Mammary epithelial cell (primary cell): ENCODE measurements at regions of chr1 and their contacts with region 1.

Region 1: DNA sequence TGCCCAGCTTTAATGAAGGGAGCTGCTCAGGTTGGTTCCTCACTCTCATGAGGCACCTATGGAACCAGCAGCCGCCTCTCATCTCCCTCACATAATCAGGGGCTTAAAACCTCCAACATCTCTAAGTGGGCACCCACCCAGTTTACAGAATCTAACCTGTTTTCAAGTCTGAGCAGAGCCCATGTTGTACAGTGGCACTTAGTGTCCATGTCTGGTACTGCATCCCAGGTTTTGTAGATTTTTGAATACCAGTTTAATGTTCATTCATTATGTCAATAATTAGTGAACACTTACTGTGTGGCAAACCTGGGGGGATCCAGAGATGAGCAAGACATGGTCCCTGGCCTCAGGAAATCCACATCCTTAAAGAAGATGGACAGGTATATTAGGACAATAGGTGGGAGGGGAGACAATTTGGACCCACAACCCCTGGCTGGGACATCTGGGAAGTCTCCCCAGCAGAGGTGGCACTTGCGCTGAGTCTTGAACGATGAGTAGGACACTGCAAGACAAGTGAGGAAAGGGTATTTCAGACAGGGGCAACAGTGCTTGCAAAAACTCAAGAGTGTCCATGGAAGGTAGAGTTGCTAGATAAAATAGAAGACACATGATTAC is 83.3 kb downstream of the LACTBL1 start:
- DNase-seq: no peak
- H3K4me3 ChIP-seq: no peak overlapping the region
- H3K27ac ChIP-seq: no peak overlapping the region
- H3K4me1 ChIP-seq: no peaks in the 10 kb centered on the region
- H3K27me3 ChIP-seq: no peaks in the 10 kb centered on the region
- CTCF ChIP-seq: peak; percentile 83 to 91

Region 2: GRCh38 chr1:22625262-22625925 is 263.9 kb before region 1 on chr1:
- CTCF ChIA-PET with region 1: no interaction called
- dilution Hi-C with region 1: no loop called
- in situ Hi-C with region 1: no loop called
- intact Hi-C with region 1: no loop called
- DNase-seq: peak; percentile 4
- H3K4me3 ChIP-seq: no peak overlapping the region
- H3K27ac ChIP-seq: no peak overlapping the region
- H3K4me1 ChIP-seq: no peaks in the 10 kb centered on the region
- H3K27me3 ChIP-seq: peaks cover 7% of the 10 kb centered on the region
- CTCF ChIP-seq: no peak

Region 3: GRCh38 chr1:22673486-22674409 is 215.6 kb before region 1 on chr1:
- CTCF ChIA-PET with region 1: no interaction called
- dilution Hi-C with region 1: no loop called
- in situ Hi-C with region 1: no loop called
- intact Hi-C with region 1: loop called (anchors 1 kb)
- DNase-seq: peak; percentile 39
- H3K4me3 ChIP-seq: no peak overlapping the region
- H3K27ac ChIP-seq: no peak overlapping the region
- H3K4me1 ChIP-seq: no peaks in the 10 kb centered on the region
- H3K27me3 ChIP-seq: no peaks in the 10 kb centered on the region
- CTCF ChIP-seq: peak; percentile 66 to 77

Region 4: GRCh38 chr1:22814176-22815042 is 74.9 kb before region 1 on chr1:
- CTCF ChIA-PET with region 1: no interaction called
- dilution Hi-C with region 1: loop called (anchors 5 kb)
- in situ Hi-C with region 1: no loop called
- intact Hi-C with region 1: no loop called
- DNase-seq: no peak
- H3K4me3 ChIP-seq: no peak overlapping the region
- H3K27ac ChIP-seq: no peak overlapping the region
- H3K4me1 ChIP-seq: peaks cover 10% of the 10 kb centered on the region
- H3K27me3 ChIP-seq: no peaks in the 10 kb centered on the region
- CTCF ChIP-seq: no peak

Region 5: DNA sequence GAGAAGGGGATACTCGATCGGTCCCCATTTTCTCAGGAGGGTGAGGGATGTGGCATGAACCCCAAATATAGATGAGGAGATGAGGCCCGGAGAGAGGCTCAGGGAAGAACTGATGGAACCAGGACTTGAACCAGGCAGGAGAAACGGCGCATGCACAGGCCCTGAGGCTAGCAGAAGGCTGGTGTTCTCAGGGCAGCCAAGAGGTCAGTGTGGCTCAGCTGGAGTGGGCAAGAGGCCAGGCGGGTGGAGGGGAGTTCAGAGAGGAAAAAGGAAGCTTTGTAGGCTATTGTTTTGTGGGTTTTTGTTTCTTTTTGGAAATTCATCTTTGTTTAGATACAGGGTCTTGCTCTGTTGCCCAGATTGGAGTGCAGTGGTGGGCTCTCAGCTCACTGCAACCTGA is 38.6 kb before region 1 on chr1:
- CTCF ChIA-PET with region 1: no interaction called
- dilution Hi-C with region 1: loop called (anchors 5 kb)
- in situ Hi-C with region 1: no loop called
- intact Hi-C with region 1: no loop called
- DNase-seq: no peak
- H3K4me3 ChIP-seq: no peak overlapping the region
- H3K27ac ChIP-seq: no peak overlapping the region
- H3K4me1 ChIP-seq: no peaks in the 10 kb centered on the region
- H3K27me3 ChIP-seq: peaks cover 3% of the 10 kb centered on the region
- CTCF ChIP-seq: no peak

Region 6: DNA sequence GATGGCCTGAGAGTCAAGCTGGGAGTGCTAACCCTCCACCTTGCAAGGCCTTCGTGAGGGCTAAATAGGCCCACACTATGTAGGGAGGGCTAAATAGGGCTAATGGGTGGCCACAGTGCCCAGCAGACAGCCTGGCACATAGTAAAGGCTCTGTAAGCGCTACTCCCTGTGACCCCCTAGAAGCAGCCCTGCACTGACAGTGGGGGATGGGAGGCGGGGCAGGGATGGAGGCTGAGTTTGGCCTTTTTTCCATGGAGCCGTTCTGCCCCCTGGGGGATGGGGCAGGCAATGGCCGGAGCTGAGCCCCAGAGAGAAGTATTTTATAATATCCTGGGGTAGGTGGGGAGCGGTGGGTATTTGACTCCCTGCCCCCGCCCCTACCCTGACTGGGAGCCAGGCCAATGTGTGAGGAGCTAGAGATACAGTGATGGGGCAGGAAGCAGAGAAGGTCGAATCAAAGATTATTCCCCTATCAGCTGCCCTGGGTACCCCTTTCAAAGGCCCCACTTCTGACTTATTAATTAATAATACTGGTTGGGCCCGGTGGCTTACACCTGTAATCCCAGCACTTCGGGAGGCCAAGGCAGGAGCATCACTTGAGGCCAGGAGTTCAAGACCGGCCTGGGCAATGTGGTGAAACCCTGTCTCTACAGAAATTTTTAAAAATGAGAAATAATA is 41.1 kb after region 1 on chr1:
- CTCF ChIA-PET with region 1: no interaction called
- dilution Hi-C with region 1: no loop called
- in situ Hi-C with region 1: no loop called
- intact Hi-C with region 1: loop called (anchors 5 kb)
- DNase-seq: peak; percentile 16
- H3K4me3 ChIP-seq: no peak overlapping the region
- H3K27ac ChIP-seq: no peak overlapping the region
- H3K4me1 ChIP-seq: no peaks in the 10 kb centered on the region
- H3K27me3 ChIP-seq: no peaks in the 10 kb centered on the region
- CTCF ChIP-seq: peak; percentile 67 to 82